A673 (cell line): ENCODE measurements at regions of chr4 and their contacts with region 1.

Region 1: DNA sequence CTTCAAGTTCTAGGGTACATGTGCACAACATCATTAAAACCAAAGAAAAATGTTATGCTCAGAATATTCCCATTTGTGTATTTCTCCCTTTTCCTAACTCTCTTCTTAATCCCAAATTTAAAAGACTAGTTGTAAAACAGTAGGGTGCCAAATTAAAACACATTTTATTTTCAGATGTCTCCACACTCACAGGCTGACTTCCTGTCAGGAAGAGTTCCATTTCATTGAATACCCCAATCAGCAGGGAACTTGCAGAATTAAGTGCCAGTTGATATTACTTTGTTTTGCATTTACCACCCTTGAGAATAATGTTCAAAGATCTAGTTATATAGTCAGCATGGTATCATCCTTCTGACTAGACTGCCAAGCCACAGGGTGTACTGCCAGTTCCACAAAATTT is 207.9 kb downstream of the MAB21L2 start:
- DNase-seq: peak; percentile 98
- H3K4me3 ChIP-seq: no peak overlapping the region
- H3K27ac ChIP-seq: no peak overlapping the region
- H3K4me1 ChIP-seq: peaks cover 25% of the 10 kb centered on the region
- H3K27me3 ChIP-seq: no peaks in the 10 kb centered on the region
- CTCF ChIP-seq: no peak

Region 2: DNA sequence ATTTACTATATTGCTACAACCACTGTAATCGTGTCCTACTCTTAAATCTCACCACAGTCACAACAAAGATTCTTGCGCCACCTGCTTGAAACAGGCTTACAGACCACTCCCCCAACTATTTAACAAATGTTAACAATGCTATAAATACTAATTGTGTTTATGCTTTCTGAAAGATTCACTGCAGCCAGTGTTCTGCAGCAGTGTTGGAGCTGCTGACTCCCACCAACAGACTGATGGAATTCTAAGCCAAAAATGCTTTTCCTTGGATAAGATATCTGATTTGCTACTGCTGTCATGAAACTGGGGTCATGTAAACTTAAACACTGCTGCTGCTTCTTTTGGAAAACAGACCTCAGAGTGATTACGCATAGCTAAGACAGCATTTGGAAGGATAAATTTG is 452.1 kb before region 1 on chr4:
- CTCF ChIA-PET with region 1: no interaction called
- POLR2A ChIA-PET with region 1: interaction called, 11 read pairs
- intact Hi-C with region 1: no loop called
- DNase-seq: no peak
- H3K4me3 ChIP-seq: no peak overlapping the region
- H3K27ac ChIP-seq: no peak overlapping the region
- H3K4me1 ChIP-seq: peaks cover 6% of the 10 kb centered on the region
- H3K27me3 ChIP-seq: no peaks in the 10 kb centered on the region
- CTCF ChIP-seq: no peak

Region 3: DNA sequence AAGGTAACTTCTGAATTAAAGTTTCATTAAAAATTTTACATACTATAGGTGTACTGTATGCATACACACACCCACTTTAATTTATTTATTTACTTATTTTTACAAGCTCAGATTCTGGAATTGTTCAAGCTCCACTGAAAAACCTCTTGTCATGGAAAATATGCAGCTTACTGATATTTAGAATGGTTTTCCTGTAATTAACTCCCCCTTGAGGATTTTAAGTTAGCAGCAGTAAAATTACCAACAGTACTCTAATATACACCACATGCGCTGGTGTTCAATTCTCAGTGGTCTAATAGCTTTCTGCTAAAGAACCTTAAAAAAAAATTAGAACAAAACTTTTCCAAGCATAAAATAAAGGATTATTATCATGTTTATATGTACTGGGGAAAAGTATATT is 195.9 kb before region 1 on chr4:
- CTCF ChIA-PET with region 1: no interaction called
- POLR2A ChIA-PET with region 1: no interaction called
- intact Hi-C with region 1: loop called (anchors 5 kb)
- DNase-seq: peak; percentile 90
- H3K4me3 ChIP-seq: peak overlapping the region; percentile 3
- H3K27ac ChIP-seq: peak overlapping the region; percentile 43
- H3K4me1 ChIP-seq: peaks cover 62% of the 10 kb centered on the region
- H3K27me3 ChIP-seq: no peaks in the 10 kb centered on the region
- CTCF ChIP-seq: peak; percentile 59